Activated B cell treated with CpG ODN at 0.5 μM for 24 hours (primary cell): ENCODE measurements at regions of chr7 and their contacts with region 1.

Region 1: DNA sequence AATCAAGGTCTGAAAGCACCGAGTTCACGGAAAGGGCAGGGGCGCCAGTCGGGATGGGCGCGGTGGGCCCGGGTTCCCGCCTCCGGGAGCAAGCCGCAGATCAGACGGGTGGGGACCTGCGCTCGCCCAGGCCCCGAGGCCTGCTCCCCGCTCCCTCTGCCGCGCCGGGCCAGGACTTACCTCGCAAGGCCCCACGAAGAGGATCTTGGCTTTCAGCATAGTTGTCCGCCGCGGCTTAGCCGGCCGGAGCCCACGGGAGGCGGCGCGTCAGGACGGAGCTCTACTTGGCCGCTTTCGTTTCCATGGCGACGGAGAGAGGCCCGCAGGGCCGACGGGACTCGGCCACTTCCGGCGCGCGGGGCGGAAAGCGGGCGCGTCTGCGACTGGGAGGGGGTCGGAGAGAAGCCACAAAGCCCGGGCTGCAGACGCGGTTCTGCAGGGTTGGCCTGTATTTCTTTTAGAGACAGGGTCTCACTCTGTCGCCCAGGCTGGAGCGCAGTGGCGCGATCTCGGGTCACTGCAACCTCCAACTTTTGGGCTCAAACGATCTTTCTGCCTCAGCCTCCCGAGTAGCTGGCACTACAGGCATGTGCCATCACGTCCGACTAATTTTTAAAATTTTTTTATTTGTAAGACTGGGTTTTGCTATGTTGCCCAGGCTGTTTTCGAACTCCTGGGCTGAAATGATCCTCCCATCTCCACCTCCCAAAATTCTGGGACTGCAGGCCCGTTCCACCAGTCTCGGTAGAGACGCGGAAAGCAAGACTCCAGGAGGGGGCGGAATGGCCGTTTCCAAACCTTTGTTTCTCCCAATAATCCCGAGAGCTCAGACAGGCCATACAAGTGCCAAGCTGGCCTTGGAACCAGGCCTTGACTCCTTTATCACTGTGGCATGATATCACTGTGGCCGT is at the start of gene IFT22:
- DNase-seq: peak; percentile 85
- ATAC-seq: peak; percentile 98
- H3K4me3 Mint-ChIP-seq: peak within 1 kb of the TSS; percentile 89
- H3K27ac Mint-ChIP-seq: peak within 1 kb of the TSS; percentile 76
- H3K4me1 Mint-ChIP-seq: peaks cover 18% of the 10 kb centered on the region
- H3K27me3 Mint-ChIP-seq: no peaks in the 10 kb centered on the region
- CTCF ChIP-seq: no peak
- total RNA-seq, gene IFT22: 9.8 and 10.7 TPM in 2 replicates

Region 2: GRCh38 chr7:101244375-101245146 is 77.2 kb before region 1 on chr7 and contains the start of gene FIS1:
- CTCF ChIA-PET with region 1: no interaction called
- POLR2A ChIA-PET with region 1: interaction called, 6 read pairs
- intact Hi-C with region 1: loop called (anchors 2 kb)
- DNase-seq: peak; percentile 96
- ATAC-seq: peak; percentile 94
- H3K4me3 Mint-ChIP-seq: peak within 1 kb of the TSS; percentile 95
- H3K27ac Mint-ChIP-seq: peak within 1 kb of the TSS; percentile 95
- H3K4me1 Mint-ChIP-seq: peaks cover 42% of the 10 kb centered on the region
- H3K27me3 Mint-ChIP-seq: no peaks in the 10 kb centered on the region
- CTCF ChIP-seq: no peak
- total RNA-seq, gene FIS1: 113 and 117 TPM in 2 replicates

Region 3: DNA sequence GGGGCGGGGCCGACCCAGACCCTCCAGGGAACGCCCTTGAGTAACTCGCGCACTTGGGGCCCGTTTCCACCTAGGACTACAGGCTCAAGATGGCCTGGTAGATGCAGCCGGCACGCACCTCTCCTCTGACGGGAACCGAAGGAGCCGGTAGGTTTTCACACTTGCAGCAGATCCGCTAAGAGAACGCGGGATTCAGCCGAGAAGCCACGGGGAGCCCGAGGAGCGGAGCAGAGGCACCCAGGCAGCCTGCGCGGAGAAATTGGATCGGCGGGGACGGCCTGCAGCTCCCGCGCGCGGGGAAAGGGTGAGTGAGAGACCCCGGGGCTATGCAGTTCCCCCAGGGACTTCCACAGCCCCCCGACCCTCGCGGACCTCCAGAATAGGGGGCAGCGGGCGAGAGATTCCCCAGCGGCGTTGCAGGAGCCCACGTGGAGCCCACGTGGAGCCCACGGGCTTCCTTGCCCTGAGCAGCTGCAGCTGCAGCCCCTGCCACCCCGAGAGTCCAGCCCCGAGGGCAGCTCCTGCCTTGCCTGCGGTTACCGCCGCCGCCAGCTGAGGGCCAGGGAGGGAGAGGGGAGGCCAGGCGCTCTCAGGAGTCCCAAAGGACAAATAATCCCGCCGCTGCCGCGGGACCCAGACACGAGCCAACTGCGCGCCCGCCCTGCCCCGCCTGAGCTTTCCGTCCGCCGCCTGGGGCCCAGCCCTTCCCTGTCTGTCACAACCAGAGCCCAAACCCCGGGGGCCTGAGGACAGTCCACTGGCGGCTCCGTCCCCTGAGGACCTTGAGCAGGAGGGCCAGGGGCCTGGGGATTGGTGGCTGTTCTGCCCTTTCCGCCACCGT is 13.3 kb before region 1 on chr7:
- CTCF ChIA-PET with region 1: no interaction called
- POLR2A ChIA-PET with region 1: interaction called, 6 read pairs
- intact Hi-C with region 1: loop called (anchors 1 kb)
- DNase-seq: no peak
- ATAC-seq: peak; percentile 77
- H3K4me3 Mint-ChIP-seq: peak overlapping the region; percentile 90
- H3K27ac Mint-ChIP-seq: peak overlapping the region; percentile 35
- H3K4me1 Mint-ChIP-seq: peaks cover 7% of the 10 kb centered on the region
- H3K27me3 Mint-ChIP-seq: peaks cover 31% of the 10 kb centered on the region
- CTCF ChIP-seq: no peak

Region 4: GRCh38 chr7:101390901-101391301 is 69.2 kb after region 1 on chr7:
- CTCF ChIA-PET with region 1: no interaction called
- POLR2A ChIA-PET with region 1: interaction called, 7 read pairs
- intact Hi-C with region 1: loop called (anchors 5 kb)
- DNase-seq: peak; percentile 41
- ATAC-seq: peak; percentile 96
- H3K4me3 Mint-ChIP-seq: peak overlapping the region; percentile 67
- H3K27ac Mint-ChIP-seq: peak overlapping the region; percentile 77
- H3K4me1 Mint-ChIP-seq: peaks cover 43% of the 10 kb centered on the region
- H3K27me3 Mint-ChIP-seq: peaks cover 5% of the 10 kb centered on the region
- CTCF ChIP-seq: no peak